ENCODE measurements at regions of chr6 and their contacts with region 1.

Region 1: GRCh38 chr6:3848925-3849605 is at the start of gene FAM50B:
- DNase-seq: peak; percentile 58 to 85
- ATAC-seq: peak; percentile 98 to 99
- H3K4me3 ChIP-seq: peak within 1 kb of the TSS; percentile 38
- H3K27ac ChIP-seq: peak within 1 kb of the TSS; percentile 81 to 91
- H3K4me1 ChIP-seq: peaks cover under 1% of the 10 kb centered on the region; the same call in 2 of the 3 replicates
- CTCF ChIP-seq: peak; percentile 83
- EP300 ChIP-seq: no peak
- POLR2A ChIP-seq: no peak
- RAD21 ChIP-seq: peak; percentile 80 to 95
- polyA plus RNA-seq, gene FAM50B: 4.6 and 5.1 TPM in 2 replicates

Region 2: GRCh38 chr6:3748208-3749066 is 100.6 kb before region 1 on chr6:
- CTCF ChIA-PET with region 1: interaction called, 43 read pairs
- POLR2A ChIA-PET with region 1: interaction called, 5 read pairs
- DNase-seq: peak; percentile 75 to 86
- ATAC-seq: peak; percentile 74 to 83
- H3K4me3 ChIP-seq: no peak overlapping the region
- H3K27ac ChIP-seq: peak overlapping the region; percentile 41 to 53; a peak in 2 of 6 replicates
- H3K4me1 ChIP-seq: peaks cover 39% of the 10 kb centered on the region
- CTCF ChIP-seq: peak; percentile 69
- EP300 ChIP-seq: no peak
- POLR2A ChIP-seq: no peak
- RAD21 ChIP-seq: peak; percentile 66 to 72

Region 3: GRCh38 chr6:3825851-3826581 is 23.0 kb before region 1 on chr6:
- CTCF ChIA-PET with region 1: interaction called, 28 read pairs
- POLR2A ChIA-PET with region 1: no interaction called
- DNase-seq: peak; percentile 62 to 86
- ATAC-seq: peak; percentile 98 to 99
- H3K4me3 ChIP-seq: no peak overlapping the region
- H3K27ac ChIP-seq: peak overlapping the region; percentile 83 to 95
- H3K4me1 ChIP-seq: peaks cover 22% of the 10 kb centered on the region
- CTCF ChIP-seq: no peak
- EP300 ChIP-seq: no peak; a peak in 1 of 5 replicates
- POLR2A ChIP-seq: no peak
- RAD21 ChIP-seq: no peak

Region 4: DNA sequence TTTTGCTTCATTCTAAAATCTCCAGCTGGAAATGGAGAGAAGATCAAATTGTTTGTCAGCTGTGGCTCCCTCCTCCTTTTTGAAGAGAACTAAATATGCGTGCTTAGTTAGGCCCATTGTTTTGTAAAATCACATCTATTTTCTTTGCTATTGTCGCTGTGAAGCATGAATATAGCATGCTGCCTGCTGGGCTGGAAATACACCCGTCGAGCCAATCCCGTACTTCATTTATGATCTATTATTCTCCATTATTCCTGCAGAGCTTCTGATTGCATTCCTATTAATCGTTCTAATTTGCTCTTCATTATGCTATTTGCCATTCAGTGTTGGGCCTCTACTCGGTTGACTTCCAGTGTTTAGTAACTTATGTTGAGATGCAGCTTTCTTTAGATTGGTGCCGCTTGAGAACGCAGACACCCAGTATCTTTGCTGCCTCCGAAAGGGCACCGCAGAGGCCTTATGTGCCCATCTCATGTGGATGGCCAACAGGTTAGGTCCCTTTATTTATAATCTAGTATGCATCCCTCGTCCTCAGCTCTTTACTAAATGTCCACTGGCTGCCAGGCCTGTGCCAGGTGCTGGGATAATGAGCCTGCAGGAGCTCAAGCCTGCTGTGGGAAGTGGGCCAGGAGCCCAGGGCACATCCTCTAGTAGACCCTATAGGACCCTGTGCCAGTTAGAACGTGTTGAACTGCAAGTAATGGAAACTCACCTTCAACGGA is 45.7 kb after region 1 on chr6:
- CTCF ChIA-PET with region 1: interaction called, 11 read pairs
- POLR2A ChIA-PET with region 1: no interaction called
- DNase-seq: no peak
- ATAC-seq: no peak
- H3K4me3 ChIP-seq: no peak overlapping the region
- H3K27ac ChIP-seq: no peak overlapping the region
- H3K4me1 ChIP-seq: no peaks in the 10 kb centered on the region
- CTCF ChIP-seq: no peak
- EP300 ChIP-seq: no peak
- POLR2A ChIP-seq: no peak
- RAD21 ChIP-seq: no peak

Region 5: DNA sequence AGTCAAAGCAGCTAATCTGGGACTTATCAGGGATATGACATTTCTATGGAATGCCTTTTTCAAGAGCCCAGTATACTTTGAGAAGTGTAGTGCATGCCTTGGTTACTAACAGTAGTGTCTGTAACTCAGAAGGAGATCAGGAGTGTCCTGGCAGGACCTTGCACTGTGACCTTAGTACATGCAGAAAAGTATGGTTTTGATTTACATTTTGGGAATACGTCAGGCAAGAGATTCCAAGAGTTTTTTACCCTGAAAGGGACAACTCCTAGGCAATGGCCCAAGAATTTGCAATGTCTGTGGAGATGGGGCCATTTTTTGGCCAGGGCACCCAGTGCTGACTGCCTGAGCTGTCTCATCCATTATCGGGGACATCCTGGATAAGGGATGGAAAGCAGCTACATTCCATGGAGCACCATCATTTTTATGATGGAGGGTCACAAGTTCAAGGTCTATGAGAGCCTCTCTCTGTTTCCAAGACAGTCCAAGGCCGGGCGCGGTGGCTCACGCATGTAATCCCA is 80.3 kb after region 1 on chr6:
- CTCF ChIA-PET with region 1: interaction called, 97 read pairs
- POLR2A ChIA-PET with region 1: interaction called, 6 read pairs
- DNase-seq: no peak
- ATAC-seq: no peak
- H3K4me3 ChIP-seq: no peak overlapping the region
- H3K27ac ChIP-seq: no peak overlapping the region; a peak in 1 of 6 replicates
- H3K4me1 ChIP-seq: peaks cover 13% of the 10 kb centered on the region; the same call in 2 of the 3 replicates
- CTCF ChIP-seq: no peak
- EP300 ChIP-seq: no peak
- POLR2A ChIP-seq: no peak
- RAD21 ChIP-seq: no peak

Region 6: GRCh38 chr6:3990692-3991501 is 141.8 kb after region 1 on chr6:
- CTCF ChIA-PET with region 1: interaction called, 18 read pairs
- POLR2A ChIA-PET with region 1: interaction called, 5 read pairs
- DNase-seq: peak; percentile 55 to 80
- ATAC-seq: peak; percentile 97 to 98
- H3K4me3 ChIP-seq: no peak overlapping the region
- H3K27ac ChIP-seq: peak overlapping the region; percentile 34 to 69; a peak in 4 of 6 replicates
- H3K4me1 ChIP-seq: peaks cover 19% of the 10 kb centered on the region; the same call in 2 of the 3 replicates
- CTCF ChIP-seq: peak; percentile 65
- EP300 ChIP-seq: no peak
- POLR2A ChIP-seq: no peak
- RAD21 ChIP-seq: peak; percentile 84 to 90